Left lung (tissue), 14 donors: ENCODE measurements at regions of chr14 and their contacts with region 1.

Region 1: DNA sequence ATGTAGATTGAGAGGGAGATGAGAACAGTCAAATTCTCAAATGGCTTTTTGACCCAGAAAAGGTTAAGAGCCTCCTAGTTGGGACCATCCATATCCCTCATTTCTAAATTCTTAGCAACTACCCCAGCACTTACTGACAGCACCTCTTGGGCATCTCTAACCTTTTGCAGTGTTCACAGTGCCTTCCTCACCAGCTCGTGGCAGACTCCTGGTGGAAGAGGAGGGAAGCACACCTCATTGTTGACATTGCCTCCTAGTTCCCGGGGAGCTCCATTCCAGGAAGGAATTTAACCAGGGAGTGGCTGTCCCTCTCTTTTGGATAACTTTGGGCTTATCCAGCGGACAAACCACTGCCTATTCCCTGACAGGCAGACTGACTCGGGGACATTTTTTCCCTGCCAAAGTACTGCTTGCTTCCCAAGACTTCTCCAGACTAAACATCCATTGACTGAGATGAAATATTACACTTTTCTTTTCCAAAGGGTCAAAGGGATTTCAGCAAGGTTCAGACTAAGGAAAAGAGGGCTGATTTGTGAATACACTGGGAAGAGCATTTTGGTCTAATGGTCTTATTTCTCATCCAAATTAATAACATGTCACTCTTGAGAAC is 9.0 kb upstream of the OR6J1 start:
- DNase-seq: peak in 3 of 4 donors; percentile 25 to 61 (median 54)
- ATAC-seq: peak; percentile 94
- H3K4me3 ChIP-seq: no peak overlapping the region
- H3K27ac ChIP-seq: no peak overlapping the region
- H3K4me1 ChIP-seq: no peaks in the 10 kb centered on the region
- H3K27me3 ChIP-seq: no peaks in the 10 kb centered on the region
- CTCF ChIP-seq: peak; percentile 67 to 74

Region 2: GRCh38 chr14:22200977-22201605 is 452.0 kb before region 1 on chr14:
- intact Hi-C with region 1: no loop called
- DNase-seq: peak in 1 of 4 donors; percentile 37
- ATAC-seq: peak; percentile 90
- H3K4me3 ChIP-seq: no peak overlapping the region
- H3K27ac ChIP-seq: no peak overlapping the region
- H3K4me1 ChIP-seq: no peaks in the 10 kb centered on the region
- H3K27me3 ChIP-seq: no peaks in the 10 kb centered on the region
- CTCF ChIP-seq: peak; percentile 51 to 53

Region 3: GRCh38 chr14:22570132-22570949 is 82.8 kb before region 1 on chr14:
- intact Hi-C with region 1: loop called in 1 of 2 experiments (anchors 5 kb)
- DNase-seq: peak in 2 of 4 donors; percentile 82 to 91
- ATAC-seq: peak; percentile 92
- H3K4me3 ChIP-seq: no peak overlapping the region
- H3K27ac ChIP-seq: peak overlapping the region in 1 of 2 donors; percentile 25
- H3K4me1 ChIP-seq: peaks cover 0 to 51% of the 10 kb centered on the region in 2 donors
- H3K27me3 ChIP-seq: no peaks in the 10 kb centered on the region
- CTCF ChIP-seq: peak; percentile 81 to 82